ENCODE measurements at regions of chr3 and their contacts with region 1.

Region 1: GRCh38 chr3:43162230-43163084 is 56.6 kb upstream of the POMGNT2 start:
- DNase-seq: peak; percentile 49
- H3K4me3 Mint-ChIP-seq: no peak overlapping the region
- H3K27ac Mint-ChIP-seq: no peak overlapping the region
- H3K4me1 Mint-ChIP-seq: no peaks in the 10 kb centered on the region
- H3K27me3 Mint-ChIP-seq: no peaks in the 10 kb centered on the region
- CTCF ChIP-seq: peak; percentile 24

Region 2: DNA sequence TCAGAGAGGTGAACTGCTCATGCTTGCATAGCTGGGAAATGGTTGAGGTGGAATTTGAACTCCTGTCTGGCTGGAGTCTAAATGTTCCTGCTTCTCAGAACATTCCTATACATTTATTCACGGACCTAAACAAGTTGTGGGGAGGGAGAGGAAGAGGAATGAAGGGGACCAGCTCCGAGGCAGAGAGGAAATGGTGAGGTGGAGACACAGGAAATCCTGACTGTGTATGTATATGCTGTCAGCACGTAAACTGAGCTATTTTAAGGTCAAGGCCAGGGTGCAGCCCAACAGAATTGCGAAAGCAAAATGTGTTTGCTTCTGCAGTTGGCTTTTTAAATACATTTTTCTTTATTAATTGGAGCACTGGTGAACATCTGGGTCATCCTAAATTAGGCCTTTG is 17.6 kb after region 1 on chr3:
- CTCF ChIA-PET with region 1: interaction called, 18 read pairs
- POLR2A ChIA-PET with region 1: interaction called, 4 read pairs
- intact Hi-C with region 1: no loop called
- DNase-seq: peak; percentile 85
- H3K4me3 Mint-ChIP-seq: peak overlapping the region; percentile 44
- H3K27ac Mint-ChIP-seq: peak overlapping the region; percentile 61
- H3K4me1 Mint-ChIP-seq: peaks cover 45% of the 10 kb centered on the region
- H3K27me3 Mint-ChIP-seq: no peaks in the 10 kb centered on the region
- CTCF ChIP-seq: no peak

Region 3: GRCh38 chr3:43215663-43216275 is 53.3 kb after region 1 on chr3:
- CTCF ChIA-PET with region 1: interaction called, 5 read pairs
- POLR2A ChIA-PET with region 1: no interaction called
- intact Hi-C with region 1: loop called (anchors 2 kb)
- DNase-seq: no peak
- H3K4me3 Mint-ChIP-seq: no peak overlapping the region
- H3K27ac Mint-ChIP-seq: no peak overlapping the region
- H3K4me1 Mint-ChIP-seq: peaks cover 20% of the 10 kb centered on the region
- H3K27me3 Mint-ChIP-seq: no peaks in the 10 kb centered on the region
- CTCF ChIP-seq: no peak

Region 4: GRCh38 chr3:43378066-43378935 is 215.8 kb after region 1 on chr3:
- CTCF ChIA-PET with region 1: interaction called, 35 read pairs
- POLR2A ChIA-PET with region 1: no interaction called
- intact Hi-C with region 1: loop called (anchors 1 kb)
- DNase-seq: peak; percentile 63
- H3K4me3 Mint-ChIP-seq: no peak overlapping the region
- H3K27ac Mint-ChIP-seq: no peak overlapping the region
- H3K4me1 Mint-ChIP-seq: no peaks in the 10 kb centered on the region
- H3K27me3 Mint-ChIP-seq: no peaks in the 10 kb centered on the region
- CTCF ChIP-seq: peak; percentile 44

Region 5: GRCh38 chr3:43503067-43503728 is 340.7 kb after region 1 on chr3:
- CTCF ChIA-PET with region 1: interaction called, 98 read pairs
- POLR2A ChIA-PET with region 1: interaction called, 6 read pairs
- intact Hi-C with region 1: loop called (anchors 1 kb)
- DNase-seq: peak; percentile 37
- H3K4me3 Mint-ChIP-seq: no peak overlapping the region
- H3K27ac Mint-ChIP-seq: no peak overlapping the region
- H3K4me1 Mint-ChIP-seq: peaks cover 4% of the 10 kb centered on the region
- H3K27me3 Mint-ChIP-seq: no peaks in the 10 kb centered on the region
- CTCF ChIP-seq: peak; percentile 51

Region 6: DNA sequence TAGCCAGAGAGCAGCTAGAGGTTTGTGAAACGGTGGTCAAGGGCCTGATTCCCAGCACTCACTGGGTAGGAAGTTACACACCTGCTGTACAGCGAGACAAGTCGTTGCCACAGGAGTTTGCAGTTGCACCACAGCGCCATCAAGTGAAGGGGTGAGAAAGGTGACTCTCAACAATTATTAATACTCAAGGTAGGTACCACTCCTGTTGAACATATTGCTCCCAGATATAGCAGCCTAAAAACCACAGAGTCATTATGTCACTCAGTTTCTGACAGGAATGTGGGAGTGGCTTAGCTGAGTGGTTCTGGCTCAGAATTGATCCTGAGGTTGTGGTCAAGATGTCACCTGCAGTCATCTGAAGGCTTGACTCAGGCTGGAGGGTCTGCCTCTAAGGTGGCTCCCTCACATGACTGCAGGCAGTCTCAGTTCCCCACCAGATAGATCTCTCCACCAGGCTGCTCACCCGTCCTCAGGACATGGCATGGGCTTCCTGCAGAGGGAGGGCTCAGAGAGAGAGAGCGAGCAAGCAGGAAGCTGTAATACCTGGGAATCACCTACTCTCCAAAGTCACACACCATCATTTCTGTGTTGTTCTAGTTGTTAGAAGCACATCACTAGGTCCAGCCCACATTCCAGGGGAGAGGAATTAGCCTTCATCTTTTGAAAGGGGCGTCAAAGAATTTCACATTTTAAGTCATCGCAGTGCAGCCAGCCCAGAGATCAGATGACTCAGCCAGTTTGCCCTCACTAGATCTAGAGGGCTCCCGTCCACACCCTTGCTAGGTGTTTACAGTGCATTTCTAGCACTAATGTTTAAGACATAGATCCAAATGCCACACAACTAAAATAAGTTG is 476.4 kb after region 1 on chr3:
- CTCF ChIA-PET with region 1: interaction called, 4 read pairs
- POLR2A ChIA-PET with region 1: no interaction called
- intact Hi-C with region 1: loop called (anchors 2 kb)
- DNase-seq: peak; percentile 67
- H3K4me3 Mint-ChIP-seq: peak overlapping the region; percentile 53
- H3K27ac Mint-ChIP-seq: peak overlapping the region; percentile 77
- H3K4me1 Mint-ChIP-seq: peaks cover 13% of the 10 kb centered on the region
- H3K27me3 Mint-ChIP-seq: no peaks in the 10 kb centered on the region
- CTCF ChIP-seq: peak; percentile 27

Measured in MCF 10A (cell line).